GM12878 (cell line): ENCODE measurements at regions of chr20 and their contacts with region 1.

Region 1: DNA sequence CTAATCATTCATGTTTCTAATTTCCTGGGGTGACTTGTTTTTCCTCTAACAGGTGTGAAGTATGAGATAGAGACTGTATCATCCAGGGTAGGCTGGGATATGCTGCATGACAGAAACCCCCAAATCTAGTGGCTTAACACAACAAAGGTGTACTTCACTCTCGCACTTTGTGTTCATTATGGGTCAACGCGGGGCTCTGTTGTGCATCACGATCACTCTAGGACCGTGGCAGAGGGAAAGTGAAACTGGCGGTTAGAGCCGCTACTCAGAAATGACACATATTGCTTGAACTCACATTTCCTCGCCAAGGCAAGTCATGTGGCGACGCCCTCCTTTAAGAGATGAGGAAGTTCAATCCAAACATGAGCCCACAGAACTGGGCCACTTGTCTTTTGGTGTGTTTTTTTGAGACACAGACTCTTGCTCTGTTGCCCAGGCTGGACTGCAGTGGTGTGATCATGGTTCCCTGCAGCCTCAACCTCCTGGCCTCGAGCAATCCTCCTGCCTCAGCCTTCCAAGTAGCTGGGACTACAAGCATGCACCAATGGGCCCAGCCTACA is 41.3 kb downstream of the PCNA start:
- DNase-seq: peak; percentile 98
- ATAC-seq: peak; percentile 81
- H3K4me3 ChIP-seq: no peak overlapping the region; the same call in 1 of the 2 replicates
- H3K27ac ChIP-seq: peak overlapping the region; percentile 68
- H3K4me1 ChIP-seq: peaks cover 47% of the 10 kb centered on the region
- H3K27me3 ChIP-seq: no peaks in the 10 kb centered on the region; a peak in 1 of 4 replicates
- CTCF ChIP-seq: no peak
- EP300 ChIP-seq: peak; percentile 93 to 98
- POLR2A ChIP-seq: peak; percentile 51
- RAD21 ChIP-seq: no peak

Region 2: DNA sequence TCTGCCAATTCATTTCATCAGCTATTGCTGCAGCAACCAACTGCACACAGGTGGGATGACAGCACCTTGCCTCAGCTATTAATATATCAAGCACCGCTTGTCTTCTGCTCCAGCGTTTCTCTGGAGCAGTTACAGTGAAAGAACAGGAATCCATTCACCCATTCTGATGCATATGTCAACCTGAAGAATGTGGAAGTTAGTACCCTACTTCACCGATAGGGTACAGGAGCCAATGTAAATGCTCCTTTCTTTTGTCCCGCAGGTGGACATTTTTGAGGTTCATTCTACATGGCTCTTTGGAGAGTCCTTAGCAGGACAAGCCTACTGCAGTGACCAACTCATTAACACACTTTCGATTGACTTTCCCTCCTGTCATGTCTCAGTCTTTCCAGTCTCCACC is 496.6 kb before region 1 on chr20:
- CTCF ChIA-PET with region 1: no interaction called
- POLR2A ChIA-PET with region 1: no interaction called
- RAD21 ChIA-PET with region 1: no interaction called
- SMC1A ChIA-PET with region 1: no interaction called
- in situ Hi-C with region 1: no loop called
- intact Hi-C with region 1: no loop called
- DNase-seq: no peak
- ATAC-seq: no peak
- H3K4me3 ChIP-seq: no peak overlapping the region
- H3K27ac ChIP-seq: no peak overlapping the region
- H3K4me1 ChIP-seq: no peaks in the 10 kb centered on the region
- H3K27me3 ChIP-seq: 0 out of 4 replicates have a peak, but pooled peaks cover 0 to 1% of the 10 kb centered on the region in 2 experiments
- CTCF ChIP-seq: 0 out of 6 replicates have a peak, but pooled peaks of 1 of the 3 experiments have one; percentile 7
- EP300 ChIP-seq: no peak
- POLR2A ChIP-seq: no peak
- RAD21 ChIP-seq: no peak

Region 3: DNA sequence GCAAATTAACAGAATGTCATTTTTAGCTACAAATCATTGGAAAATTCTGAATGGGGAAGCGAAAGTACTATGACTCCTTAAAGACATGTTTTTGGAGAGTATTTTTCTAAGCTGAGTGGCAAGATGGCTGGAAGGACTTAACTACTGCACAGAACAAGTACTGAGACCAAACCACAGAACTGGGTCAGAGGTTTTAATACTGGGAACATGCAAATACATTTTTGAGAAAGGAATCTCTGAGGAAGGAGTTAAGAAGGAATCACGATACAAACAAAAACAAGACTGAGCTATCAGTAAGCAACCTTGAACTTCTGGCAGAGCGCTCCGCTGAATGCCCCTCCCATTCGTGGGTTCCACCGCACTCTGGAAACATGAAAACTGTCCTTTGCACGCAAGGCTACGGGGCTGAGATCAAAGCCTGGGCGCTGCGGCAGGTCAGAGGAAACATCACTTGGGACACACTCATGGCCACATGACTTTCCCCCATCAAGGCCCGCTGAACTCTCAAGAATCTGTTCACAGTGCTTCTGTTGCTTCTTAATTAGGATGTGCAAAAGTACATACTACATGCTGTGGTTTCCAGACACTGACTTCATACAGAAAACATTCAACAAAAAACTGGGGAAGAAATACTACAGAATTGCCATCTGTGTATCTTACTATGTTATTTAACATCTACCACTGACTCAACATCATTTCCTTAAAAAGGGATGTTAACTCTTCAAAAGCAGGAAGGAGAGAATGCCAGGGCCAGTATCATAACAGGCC is 105.0 kb before region 1 on chr20:
- CTCF ChIA-PET with region 1: interaction called, 5 read pairs
- POLR2A ChIA-PET with region 1: interaction called, 14 read pairs
- RAD21 ChIA-PET with region 1: interaction called, 12 read pairs
- SMC1A ChIA-PET with region 1: interaction called, 20 read pairs
- in situ Hi-C with region 1: no loop called
- intact Hi-C with region 1: loop called (anchors 1 kb)
- DNase-seq: peak; percentile 85
- ATAC-seq: peak; percentile 94
- H3K4me3 ChIP-seq: peak overlapping the region; percentile 42
- H3K27ac ChIP-seq: peak overlapping the region; percentile 76
- H3K4me1 ChIP-seq: peaks cover 4% of the 10 kb centered on the region
- H3K27me3 ChIP-seq: no peaks in the 10 kb centered on the region
- CTCF ChIP-seq: no peak
- EP300 ChIP-seq: peak; percentile 94 to 97
- POLR2A ChIP-seq: peak; percentile 45; the same call in 1 of the 2 replicates
- RAD21 ChIP-seq: 0 out of 2 replicates have a peak, but pooled peaks have one; percentile 12

Region 4: GRCh38 chr20:5001174-5002076 is 77.1 kb before region 1 on chr20 and contains the start of gene SLC23A2:
- CTCF ChIA-PET with region 1: interaction called, 6 read pairs
- POLR2A ChIA-PET with region 1: interaction called, 12 read pairs
- RAD21 ChIA-PET with region 1: interaction called, 22 read pairs
- SMC1A ChIA-PET with region 1: interaction called, 30 read pairs
- in situ Hi-C with region 1: no loop called
- intact Hi-C with region 1: no loop called
- DNase-seq: no peak
- ATAC-seq: peak; percentile 59
- H3K4me3 ChIP-seq: peak within 1 kb of the TSS; percentile 94
- H3K27ac ChIP-seq: no peak within 1 kb of the TSS
- H3K4me1 ChIP-seq: peaks cover 11% of the 10 kb centered on the region
- H3K27me3 ChIP-seq: no peaks in the 10 kb centered on the region; a peak in 1 of 4 replicates
- CTCF ChIP-seq: no peak
- EP300 ChIP-seq: no peak
- POLR2A ChIP-seq: peak; percentile 68
- RAD21 ChIP-seq: no peak
- polyA plus RNA-seq, gene SLC23A2: 4.4 to 5.9 TPM

Region 5: DNA sequence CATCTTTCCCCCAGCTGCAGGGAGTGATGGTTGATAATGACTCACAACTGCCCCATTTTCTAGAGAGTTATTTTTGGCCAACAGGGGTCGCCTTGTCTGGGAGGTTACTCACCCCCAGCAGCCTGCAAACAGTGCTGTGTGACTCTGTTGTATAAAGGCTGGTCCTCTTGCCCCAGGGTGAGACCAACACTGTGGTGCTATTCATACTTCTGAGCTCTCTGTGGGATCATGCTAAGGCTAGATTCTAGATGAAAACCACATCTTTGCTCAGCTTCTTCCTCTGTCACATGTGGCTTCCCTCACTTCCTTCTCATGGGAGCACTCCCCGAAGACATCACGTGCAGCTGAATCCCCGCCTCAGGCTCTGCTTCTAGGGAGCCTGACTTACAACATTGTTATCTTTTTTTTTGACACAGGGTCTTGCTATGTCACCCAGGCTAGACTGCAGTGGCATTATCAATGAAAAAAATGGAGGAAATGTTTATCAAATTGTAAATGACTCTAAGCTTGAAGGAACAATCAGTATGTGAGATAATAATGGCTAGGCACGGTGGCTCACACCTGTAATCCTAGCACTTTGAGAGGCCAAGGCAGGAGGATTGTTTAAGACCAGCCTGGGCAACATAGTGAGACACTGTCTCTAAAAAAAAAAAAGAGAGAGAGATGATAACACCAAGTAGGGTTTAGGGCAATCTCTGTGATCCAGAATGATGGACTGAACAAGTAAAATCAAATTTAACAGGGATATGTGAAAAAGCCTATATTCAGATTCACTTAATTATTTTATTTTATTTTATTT is 21.5 kb before region 1 on chr20:
- CTCF ChIA-PET with region 1: interaction called, 29 read pairs
- POLR2A ChIA-PET with region 1: interaction called, 22 read pairs
- RAD21 ChIA-PET with region 1: interaction called, 21 read pairs
- SMC1A ChIA-PET with region 1: interaction called, 65 read pairs
- in situ Hi-C with region 1: no loop called
- intact Hi-C with region 1: loop called (anchors 2 kb)
- DNase-seq: peak; percentile 38
- ATAC-seq: peak; percentile 97
- H3K4me3 ChIP-seq: no peak overlapping the region
- H3K27ac ChIP-seq: no peak overlapping the region
- H3K4me1 ChIP-seq: peaks cover 4% of the 10 kb centered on the region; the same call in 1 of the 2 replicates
- H3K27me3 ChIP-seq: peaks cover 0 to 8% of the 10 kb centered on the region in 2 experiments; a peak in 1 of 4 replicates
- CTCF ChIP-seq: peak; percentile 43 to 56 (median 53)
- EP300 ChIP-seq: no peak
- POLR2A ChIP-seq: no peak
- RAD21 ChIP-seq: peak; percentile 48

Region 6: DNA sequence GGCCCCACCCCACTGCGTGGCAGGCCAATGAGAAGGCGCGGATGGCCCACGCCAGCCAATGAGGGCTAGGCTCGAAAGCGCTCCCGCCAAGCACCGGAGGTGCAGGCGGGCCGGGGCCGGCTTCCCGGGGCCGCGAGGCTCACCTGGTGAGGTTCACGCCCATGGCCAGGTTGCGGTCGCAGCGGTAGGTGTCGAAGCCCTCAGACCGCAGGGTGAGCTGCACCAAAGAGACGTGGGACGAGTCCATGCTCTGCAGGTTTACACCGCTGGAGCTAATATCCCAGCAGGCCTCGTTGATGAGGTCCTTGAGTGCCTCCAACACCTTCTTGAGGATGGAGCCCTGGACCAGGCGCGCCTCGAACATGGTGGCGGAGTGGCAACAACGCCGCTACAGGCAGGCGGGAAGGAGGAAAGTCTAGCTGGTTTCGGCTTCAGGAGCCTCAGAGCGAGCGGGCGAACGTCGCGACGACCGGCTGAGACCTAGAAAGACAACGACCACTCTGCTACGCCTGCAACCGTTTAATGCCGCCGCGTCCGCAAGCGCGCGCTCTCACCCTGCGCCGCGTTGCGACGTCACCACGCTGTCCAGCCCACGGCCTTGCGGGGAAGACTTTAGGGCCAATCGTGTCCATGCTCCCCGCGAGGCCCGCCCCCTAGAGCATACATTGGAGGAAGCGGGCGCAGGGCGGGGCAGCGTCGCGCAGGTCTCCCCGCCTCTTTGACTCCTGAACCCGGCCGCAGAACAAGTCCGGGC is 41.1 kb after region 1 on chr20 and contains the start of gene PCNA:
- CTCF ChIA-PET with region 1: interaction called, 3 read pairs
- POLR2A ChIA-PET with region 1: interaction called, 3 read pairs
- RAD21 ChIA-PET with region 1: interaction called, 3 read pairs
- SMC1A ChIA-PET with region 1: interaction called, 8 read pairs
- in situ Hi-C with region 1: no loop called
- intact Hi-C with region 1: loop called (anchors 2 kb)
- DNase-seq: peak; percentile 90
- ATAC-seq: peak; percentile 94
- H3K4me3 ChIP-seq: peak within 1 kb of the TSS; percentile 84
- H3K27ac ChIP-seq: peak within 1 kb of the TSS; percentile 94
- H3K4me1 ChIP-seq: peaks cover 4% of the 10 kb centered on the region; the same call in 1 of the 2 replicates
- H3K27me3 ChIP-seq: no peaks in the 10 kb centered on the region
- CTCF ChIP-seq: no peak
- EP300 ChIP-seq: no peak
- POLR2A ChIP-seq: peak; percentile 98
- RAD21 ChIP-seq: no peak
- polyA plus RNA-seq, gene PCNA: 651 to 694 TPM

Region 7: GRCh38 chr20:5298811-5299210 is 220.3 kb after region 1 on chr20:
- CTCF ChIA-PET with region 1: no interaction called
- POLR2A ChIA-PET with region 1: no interaction called
- RAD21 ChIA-PET with region 1: no interaction called
- SMC1A ChIA-PET with region 1: no interaction called
- in situ Hi-C with region 1: no loop called
- intact Hi-C with region 1: no loop called
- DNase-seq: no peak
- ATAC-seq: no peak
- H3K4me3 ChIP-seq: no peak overlapping the region
- H3K27ac ChIP-seq: no peak overlapping the region
- H3K4me1 ChIP-seq: no peaks in the 10 kb centered on the region
- H3K27me3 ChIP-seq: peaks cover 2 to 5% of the 10 kb centered on the region in 2 experiments
- CTCF ChIP-seq: no peak
- EP300 ChIP-seq: no peak
- POLR2A ChIP-seq: no peak
- RAD21 ChIP-seq: no peak